ENCODE measurements at regions of chr5 and their contacts with region 1.

Region 1: GRCh38 chr5:107545486-107545885 is 125.3 kb downstream of the EFNA5 start:
- DNase-seq: no peak
- H3K4me3 ChIP-seq: no peak overlapping the region
- H3K27ac ChIP-seq: no peak overlapping the region
- H3K4me1 ChIP-seq: peaks cover 0 to 13% (median 7%) of the 10 kb centered on the region in 4 experiments; a peak in 3 of 7 replicates
- H3K27me3 ChIP-seq: no peaks in the 10 kb centered on the region
- CTCF ChIP-seq: no peak
- EP300 ChIP-seq: no peak
- POLR2A ChIP-seq: no peak
- RAD21 ChIP-seq: no peak

Region 2: DNA sequence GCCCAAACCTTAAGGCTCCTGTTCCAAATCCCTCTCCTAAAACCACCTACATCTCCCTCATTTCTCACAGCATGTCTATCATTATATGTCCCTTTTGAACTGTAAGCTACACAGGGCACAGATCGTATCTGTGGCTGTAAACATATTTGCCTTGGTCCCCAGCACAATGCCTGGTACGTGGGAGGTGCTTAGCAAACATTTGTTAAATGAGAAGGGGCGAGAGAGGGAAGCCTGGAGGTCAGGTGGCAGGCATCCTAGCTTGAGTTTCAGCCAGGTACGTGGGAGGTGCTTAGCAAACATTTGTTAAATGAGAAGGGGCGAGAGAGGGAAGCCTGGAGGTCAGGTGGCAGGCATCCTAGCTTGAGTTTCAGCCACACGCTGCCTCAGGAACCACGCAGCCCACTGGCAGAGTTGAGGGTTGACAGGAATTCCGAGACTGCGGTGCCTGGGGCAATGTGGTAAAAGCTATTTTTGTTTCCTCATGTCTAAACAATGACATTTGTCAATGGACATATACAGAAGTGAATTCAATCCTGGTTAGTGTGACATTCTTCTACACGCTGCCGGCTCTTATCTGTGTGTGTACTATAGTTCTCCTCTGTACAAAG is 11.7 kb after region 1 on chr5:
- CTCF ChIA-PET with region 1: interaction called, 14 read pairs
- POLR2A ChIA-PET with region 1: no interaction called
- DNase-seq: peak in 1 of 2 experiments; percentile 46
- H3K4me3 ChIP-seq: no peak overlapping the region
- H3K27ac ChIP-seq: no peak overlapping the region
- H3K4me1 ChIP-seq: peaks cover 0 to 20% (median 5%) of the 10 kb centered on the region in 4 experiments; a peak in 4 of 7 replicates
- H3K27me3 ChIP-seq: no peaks in the 10 kb centered on the region
- CTCF ChIP-seq: no peak
- EP300 ChIP-seq: no peak
- POLR2A ChIP-seq: no peak
- RAD21 ChIP-seq: no peak; a peak in 1 of 4 replicates